Right ventricle myocardium inferior (tissue), 1 donor: ENCODE measurements at regions of chr4 and their contacts with region 1.

Region 1: DNA sequence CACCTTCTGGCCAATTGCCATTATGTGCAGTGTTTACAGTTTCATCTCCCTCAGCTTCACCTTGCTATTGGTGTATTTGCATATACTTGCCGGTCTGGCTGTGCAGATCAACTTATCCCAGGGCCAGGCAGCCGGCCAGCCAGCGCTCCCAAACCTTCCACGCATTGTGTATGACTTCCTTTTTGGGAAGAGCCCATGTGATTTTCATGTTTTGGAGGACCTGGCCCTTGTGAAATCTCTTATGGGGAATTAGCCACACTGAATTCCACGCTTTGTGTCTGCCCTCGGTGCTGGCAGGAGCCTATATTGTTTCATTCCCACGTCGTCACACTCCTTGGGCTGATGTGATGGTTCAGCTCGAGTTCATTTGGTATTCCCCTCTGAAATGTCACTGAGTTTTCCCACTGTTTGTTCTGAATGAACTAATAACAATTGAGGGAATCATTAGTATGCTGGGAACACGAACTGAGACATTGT is 6.0 kb upstream of the PDLIM3 start:
- DNase-seq: no peak
- ATAC-seq: peak; percentile 65

Region 2: GRCh38 chr4:185183619-185184281 is 357.5 kb before region 1 on chr4:
- intact Hi-C with region 1: no loop called
- DNase-seq: no peak
- ATAC-seq: peak; percentile 72

Region 3: GRCh38 chr4:185566972-185567371 is 25.7 kb after region 1 on chr4:
- intact Hi-C with region 1: loop called (anchors 1 kb)
- DNase-seq: no peak
- ATAC-seq: peak; percentile 85